Ovary (tissue), 10 donors: ENCODE measurements at regions of chr11 and their contacts with region 1.

Region 1: GRCh38 chr11:36469063-36469462 is 41.0 kb downstream of the TRAF6 start:
- DNase-seq: no peak
- H3K4me3 ChIP-seq: no peak overlapping the region
- H3K27ac ChIP-seq: no peak overlapping the region
- H3K4me1 ChIP-seq: no peaks in the 10 kb centered on the region
- H3K27me3 ChIP-seq: no peaks in the 10 kb centered on the region
- CTCF ChIP-seq: no peak
- EP300 ChIP-seq: no peak
- POLR2A ChIP-seq: no peak

Region 2: GRCh38 chr11:36306888-36307287 is 162.2 kb before region 1 on chr11:
- intact Hi-C with region 1: loop called in 3 of 4 experiments (anchors 10 kb)
- DNase-seq: peak in 1 of 5 donors; percentile 48
- H3K4me3 ChIP-seq: no peak overlapping the region
- H3K27ac ChIP-seq: no peak overlapping the region
- H3K4me1 ChIP-seq: no peaks in the 10 kb centered on the region
- H3K27me3 ChIP-seq: no peaks in the 10 kb centered on the region
- CTCF ChIP-seq: peak in 2 of 3 donors; percentile 27 to 51
- EP300 ChIP-seq: no peak
- POLR2A ChIP-seq: no peak